ENCODE measurements at regions of chr3 and their contacts with region 1.

Region 1: DNA sequence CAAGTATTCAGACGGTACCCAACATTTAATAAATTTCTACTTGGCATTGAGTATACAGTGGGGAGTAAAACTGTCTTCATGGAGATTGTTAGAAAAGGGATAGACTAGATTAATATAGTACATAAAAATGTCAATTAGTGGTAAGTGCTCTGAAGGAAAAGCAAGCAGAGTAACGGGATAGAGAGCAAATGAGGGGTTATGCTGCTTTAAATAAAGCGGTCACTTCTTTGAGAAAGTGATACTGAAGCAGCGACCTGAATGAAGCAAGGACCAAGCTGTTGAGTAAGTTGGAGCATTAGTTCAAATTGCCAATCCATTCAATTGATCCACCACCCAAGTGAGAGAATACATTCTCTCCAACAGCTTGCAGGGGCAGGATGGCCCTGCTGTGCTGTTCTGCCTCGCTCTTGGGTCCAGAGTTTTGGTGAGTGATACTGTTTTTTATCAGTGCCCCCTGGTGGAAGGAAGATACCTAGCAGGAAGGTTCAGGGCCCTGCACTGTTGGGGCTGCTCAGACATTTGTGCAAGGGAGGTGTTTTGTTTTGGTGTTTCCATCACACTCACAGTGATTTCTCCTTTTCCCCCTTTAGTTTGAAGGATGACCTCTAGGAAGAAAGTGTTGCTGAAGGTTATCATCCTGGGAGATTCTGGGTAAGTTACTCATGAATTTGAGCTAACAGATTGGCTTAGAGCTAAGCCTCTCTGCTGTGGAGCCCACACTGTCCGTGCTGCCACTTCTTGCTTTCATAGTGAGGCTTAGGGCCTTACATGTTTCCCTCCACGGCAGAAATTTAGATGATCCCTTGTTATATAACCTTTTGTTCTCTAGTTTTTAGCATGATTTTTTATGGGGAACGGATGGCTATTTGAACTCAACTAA is 69.0 kb downstream of the RAB7A start:
- DNase-seq: peak; percentile 55 to 74
- H3K4me3 ChIP-seq: no peak overlapping the region
- H3K4me3 Mint-ChIP-seq: no peak overlapping the region
- H3K27ac Mint-ChIP-seq: no peak overlapping the region
- H3K4me1 ChIP-seq: no peaks in the 10 kb centered on the region
- H3K4me1 Mint-ChIP-seq: no peaks in the 10 kb centered on the region
- H3K27me3 ChIP-seq: no peaks in the 10 kb centered on the region
- H3K27me3 Mint-ChIP-seq: no peaks in the 10 kb centered on the region
- CTCF ChIP-seq: peak; percentile 75 to 78

Region 2: DNA sequence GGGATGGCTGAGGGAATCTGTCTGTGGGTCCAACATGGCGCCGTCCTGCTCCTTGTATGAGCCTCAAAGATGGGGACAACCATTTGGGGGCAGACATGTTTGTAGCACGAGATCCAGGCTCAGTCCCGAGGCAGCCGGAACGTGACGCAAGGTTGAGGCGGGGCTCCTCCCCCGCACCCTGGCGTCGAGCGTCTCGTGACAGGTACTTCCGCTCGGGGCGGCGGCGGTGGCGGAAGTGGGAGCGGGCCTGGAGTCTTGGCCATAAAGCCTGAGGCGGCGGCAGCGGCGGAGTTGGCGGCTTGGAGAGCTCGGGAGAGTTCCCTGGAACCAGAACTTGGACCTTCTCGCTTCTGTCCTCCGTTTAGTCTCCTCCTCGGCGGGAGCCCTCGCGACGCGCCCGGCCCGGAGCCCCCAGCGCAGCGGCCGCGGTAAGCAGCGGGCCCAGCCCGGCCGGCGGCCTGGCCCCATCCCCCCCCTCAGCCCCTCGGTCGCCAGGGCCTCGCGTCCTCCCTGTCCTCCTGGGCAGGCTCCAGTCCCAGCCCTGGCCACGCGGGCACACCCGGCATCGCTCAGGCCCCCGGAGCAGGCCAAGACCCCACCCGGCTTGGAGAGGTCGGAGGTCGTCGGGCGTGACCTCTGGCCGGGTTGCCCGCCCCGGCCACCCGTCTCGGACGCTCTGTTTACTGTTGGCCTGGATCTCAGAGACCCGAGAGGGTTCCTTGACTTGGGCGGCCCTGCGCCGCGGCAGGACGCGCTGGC is 68.9 kb before region 1 on chr3 and contains the start of gene RAB7A:
- CTCF ChIA-PET with region 1: interaction called, 7 read pairs
- POLR2A ChIA-PET with region 1: no interaction called
- intact Hi-C with region 1: loop called (anchors 10 kb)
- DNase-seq: peak; percentile 98
- H3K4me3 ChIP-seq: peak within 1 kb of the TSS; percentile 86
- H3K4me3 Mint-ChIP-seq: peak within 1 kb of the TSS; percentile 91
- H3K27ac Mint-ChIP-seq: peak within 1 kb of the TSS; percentile 96
- H3K4me1 ChIP-seq: peaks cover 20% of the 10 kb centered on the region
- H3K4me1 Mint-ChIP-seq: peaks cover 13% of the 10 kb centered on the region
- H3K27me3 ChIP-seq: no peaks in the 10 kb centered on the region
- H3K27me3 Mint-ChIP-seq: no peaks in the 10 kb centered on the region
- CTCF ChIP-seq: no peak
- total RNA-seq, gene RAB7A: 262 and 284 TPM in 2 replicates

Region 3: DNA sequence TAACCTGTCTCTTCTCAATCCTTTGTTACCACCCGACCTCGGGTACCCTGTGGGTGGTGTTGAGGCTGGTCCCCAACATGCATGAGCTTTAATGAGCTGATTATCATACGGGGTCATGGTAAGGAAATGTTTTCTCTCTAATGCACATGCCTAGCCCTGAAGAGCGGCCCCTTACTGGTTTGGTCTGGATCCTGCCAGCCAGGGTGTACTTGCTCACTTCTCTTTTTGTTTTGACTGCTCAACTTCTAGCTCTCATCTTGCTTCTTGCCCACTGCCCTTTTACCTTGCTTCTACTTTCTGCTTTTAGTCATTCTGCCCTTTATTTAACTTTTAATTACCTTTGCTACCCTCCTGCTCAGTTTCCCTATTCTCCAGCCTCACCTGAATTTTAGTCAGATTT is 40.1 kb after region 1 on chr3:
- CTCF ChIA-PET with region 1: no interaction called
- POLR2A ChIA-PET with region 1: no interaction called
- intact Hi-C with region 1: no loop called
- DNase-seq: no peak
- H3K4me3 ChIP-seq: no peak overlapping the region
- H3K4me3 Mint-ChIP-seq: no peak overlapping the region
- H3K27ac Mint-ChIP-seq: no peak overlapping the region
- H3K4me1 ChIP-seq: peaks cover 5% of the 10 kb centered on the region
- H3K4me1 Mint-ChIP-seq: no peaks in the 10 kb centered on the region
- H3K27me3 ChIP-seq: no peaks in the 10 kb centered on the region
- H3K27me3 Mint-ChIP-seq: no peaks in the 10 kb centered on the region
- CTCF ChIP-seq: no peak